ENCODE measurements at regions of chr1 and their contacts with region 1.

Region 1: GRCh38 chr1:48572646-48573261 is 100.8 kb upstream of the SPATA6 start:
- DNase-seq: peak; percentile 57 to 80 (median 75)
- H3K4me3 ChIP-seq: no peak overlapping the region
- H3K27ac ChIP-seq: no peak overlapping the region
- H3K4me1 ChIP-seq: peaks cover 0 to 5% (median 0%) of the 10 kb centered on the region in 4 experiments
- H3K27me3 ChIP-seq: peaks cover 0 to 4% (median 0%) of the 10 kb centered on the region in 5 experiments

Region 2: DNA sequence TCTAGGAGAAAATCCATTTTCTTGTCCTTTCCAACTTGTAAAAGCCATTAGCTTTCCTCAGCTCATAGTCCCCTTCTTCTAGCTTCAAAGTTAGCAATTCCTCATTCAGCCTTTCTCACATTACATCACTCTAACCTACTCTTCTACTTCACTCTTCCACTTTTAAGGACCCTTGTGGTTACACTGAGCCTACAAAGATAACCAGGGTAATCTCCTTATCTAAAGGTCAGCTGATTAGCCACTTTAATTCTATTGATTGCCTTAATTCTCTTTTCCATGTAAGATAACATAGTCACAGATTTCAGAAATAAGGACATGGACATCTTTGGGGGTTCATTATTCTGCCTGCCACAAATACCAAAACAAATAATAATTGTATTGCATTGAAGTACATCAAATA is 92.2 kb before region 1 on chr1:
- CTCF ChIA-PET with region 1: no interaction called
- POLR2A ChIA-PET with region 1: no interaction called
- DNase-seq: no peak
- H3K4me3 ChIP-seq: no peak overlapping the region
- H3K27ac ChIP-seq: no peak overlapping the region
- H3K4me1 ChIP-seq: no peaks in the 10 kb centered on the region
- H3K27me3 ChIP-seq: no peaks in the 10 kb centered on the region

Region 3: DNA sequence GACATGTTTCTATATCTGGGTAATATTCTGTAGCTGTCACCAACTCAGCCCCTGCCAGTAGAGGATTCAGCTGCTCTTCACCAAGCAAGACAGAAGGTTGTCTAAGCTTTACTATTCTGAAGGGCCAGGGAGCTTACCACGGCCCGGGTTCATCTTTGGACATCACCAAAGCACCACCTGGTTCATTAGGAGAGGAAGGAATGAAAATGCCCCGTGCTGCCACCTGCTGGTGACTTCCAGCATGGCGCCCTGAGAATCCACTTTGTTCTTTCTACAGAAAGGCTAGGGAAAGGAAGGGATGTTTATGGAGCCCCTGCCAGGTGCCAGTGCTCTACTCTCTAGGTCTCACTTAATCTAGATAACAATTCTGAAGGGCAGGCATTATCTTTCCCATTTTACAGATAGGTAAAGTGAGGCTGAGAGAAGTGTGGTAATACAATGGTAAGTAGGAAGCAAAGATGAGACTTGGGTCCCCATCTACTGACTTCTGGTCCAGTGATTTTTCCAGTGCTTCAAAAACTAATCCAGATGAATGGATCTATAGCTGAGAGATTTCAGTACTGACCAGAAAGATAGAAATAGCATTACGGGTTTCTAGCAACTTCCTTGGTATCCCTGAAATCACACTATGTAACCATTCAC is 124.4 kb after region 1 on chr1:
- CTCF ChIA-PET with region 1: interaction called, 11 read pairs
- POLR2A ChIA-PET with region 1: no interaction called
- DNase-seq: peak; percentile 11 to 53 (median 29)
- H3K4me3 ChIP-seq: no peak overlapping the region
- H3K27ac ChIP-seq: no peak overlapping the region
- H3K4me1 ChIP-seq: no peaks in the 10 kb centered on the region
- H3K27me3 ChIP-seq: peaks cover 0 to 7% (median 4%) of the 10 kb centered on the region in 5 experiments